AG04449 (cell line): ENCODE measurements at regions of chr7 and their contacts with region 1.

Region 1: GRCh38 chr7:5494683-5495561 is 71.3 kb upstream of the TNRC18 start:
- DNase-seq: no peak
- H3K4me3 ChIP-seq: no peak overlapping the region
- CTCF ChIP-seq: peak; percentile 94

Region 2: GRCh38 chr7:5237286-5237685 is 257.6 kb before region 1 on chr7:
- CTCF ChIA-PET with region 1: interaction called, 15 read pairs
- POLR2A ChIA-PET with region 1: no interaction called
- DNase-seq: no peak
- H3K4me3 ChIP-seq: no peak overlapping the region
- CTCF ChIP-seq: no peak

Region 3: DNA sequence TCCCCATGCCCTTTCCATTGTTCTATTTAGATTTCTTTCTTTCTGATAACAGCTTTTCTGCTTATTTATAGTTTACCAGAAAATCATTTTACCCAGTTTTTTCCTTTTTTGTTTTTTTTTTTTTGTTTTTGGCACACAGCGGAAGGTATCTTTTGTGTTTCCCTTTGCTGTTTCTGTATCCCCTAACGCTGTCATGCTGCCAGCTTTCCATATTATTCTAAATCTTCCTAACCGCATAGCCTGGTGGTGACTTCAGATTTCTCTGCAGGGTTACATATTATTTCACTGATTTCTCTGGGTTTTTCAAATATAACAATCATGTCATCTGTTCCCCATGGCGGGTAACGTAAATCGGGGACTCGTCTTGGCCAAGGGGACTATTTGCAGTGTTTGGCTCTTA is 216.2 kb before region 1 on chr7:
- CTCF ChIA-PET with region 1: no interaction called
- POLR2A ChIA-PET with region 1: no interaction called
- DNase-seq: no peak
- H3K4me3 ChIP-seq: no peak overlapping the region
- CTCF ChIP-seq: no peak

Region 4: DNA sequence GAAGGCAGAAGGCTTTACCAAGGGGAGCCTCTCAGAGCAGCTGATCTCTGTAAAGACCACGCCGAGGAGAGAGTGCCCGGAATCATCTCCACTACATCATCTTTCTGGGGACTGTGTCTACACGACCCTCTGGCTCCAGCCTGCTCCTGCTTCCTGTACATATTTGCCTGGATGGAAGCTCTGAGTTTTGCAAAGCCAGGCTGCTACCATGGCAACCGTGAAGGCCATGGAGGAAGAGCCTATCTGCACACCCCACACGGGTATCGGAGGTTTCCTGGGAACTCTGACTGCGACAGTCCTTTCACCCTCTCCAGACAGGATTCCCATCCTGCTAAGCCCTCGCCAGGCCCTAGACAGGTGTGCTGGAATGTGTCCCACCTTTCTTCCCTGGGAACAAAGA is 12.1 kb after region 1 on chr7:
- CTCF ChIA-PET with region 1: interaction called, 87 read pairs
- POLR2A ChIA-PET with region 1: no interaction called
- DNase-seq: no peak
- H3K4me3 ChIP-seq: no peak overlapping the region
- CTCF ChIP-seq: no peak

Region 5: GRCh38 chr7:5625938-5626337 is 131.0 kb after region 1 on chr7:
- CTCF ChIA-PET with region 1: no interaction called
- POLR2A ChIA-PET with region 1: no interaction called
- DNase-seq: peak; percentile 74
- H3K4me3 ChIP-seq: no peak overlapping the region
- CTCF ChIP-seq: peak; percentile 20

Region 6: GRCh38 chr7:5657901-5658300 is 163.0 kb after region 1 on chr7:
- CTCF ChIA-PET with region 1: interaction called, 17 read pairs
- POLR2A ChIA-PET with region 1: no interaction called
- DNase-seq: no peak
- H3K4me3 ChIP-seq: no peak overlapping the region
- CTCF ChIP-seq: no peak

Region 7: DNA sequence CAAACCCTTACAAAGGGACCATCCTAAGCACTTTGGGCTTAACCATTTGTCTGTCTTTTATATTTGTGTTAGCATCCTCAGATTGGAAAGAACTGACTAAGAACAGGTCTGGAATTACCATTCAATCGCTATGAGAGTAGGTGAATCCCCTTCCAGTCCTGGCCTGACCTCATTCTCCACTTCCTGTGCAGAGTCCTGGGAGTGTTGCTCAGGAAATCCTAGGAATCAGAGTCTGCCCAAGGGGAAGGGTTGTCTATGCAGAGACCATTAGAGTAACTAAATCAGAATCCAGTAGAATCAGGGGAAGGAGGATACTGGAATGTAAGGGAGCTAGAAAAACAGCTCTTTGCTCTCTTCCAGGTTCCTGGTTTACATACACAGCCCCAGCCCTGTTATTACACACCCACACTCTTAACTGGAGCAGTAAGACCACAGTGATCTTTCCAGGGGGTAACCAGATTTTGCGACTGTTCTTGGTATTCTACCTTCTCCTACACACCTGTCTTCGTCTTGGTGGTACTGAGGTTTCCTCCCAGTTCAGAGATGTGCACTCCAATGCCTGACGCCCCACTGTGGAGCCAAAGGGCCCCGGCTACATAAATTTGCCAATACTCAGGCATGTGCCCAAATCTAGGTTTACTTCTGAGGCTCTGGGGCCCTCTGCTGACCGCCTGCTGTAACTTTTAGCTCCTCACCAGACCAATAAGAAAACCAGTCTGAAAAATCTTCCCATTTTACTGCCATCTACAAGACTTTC is 182.8 kb after region 1 on chr7:
- CTCF ChIA-PET with region 1: interaction called, 53 read pairs
- POLR2A ChIA-PET with region 1: no interaction called
- DNase-seq: no peak
- H3K4me3 ChIP-seq: no peak overlapping the region
- CTCF ChIP-seq: peak; percentile 71

Region 8: GRCh38 chr7:5704534-5704922 is 209.6 kb after region 1 on chr7:
- CTCF ChIA-PET with region 1: interaction called, 59 read pairs
- POLR2A ChIA-PET with region 1: no interaction called
- DNase-seq: no peak
- H3K4me3 ChIP-seq: no peak overlapping the region
- CTCF ChIP-seq: peak; percentile 78